AG04449 (cell line): ENCODE measurements at regions of chr10 and their contacts with region 1.

Region 1: GRCh38 chr10:34637418-34637911 is 177.6 kb downstream of the PARD3 start:
- DNase-seq: no peak
- H3K4me3 ChIP-seq: no peak overlapping the region
- CTCF ChIP-seq: peak; percentile 93

Region 2: GRCh38 chr10:33330543-33331378 is 1306.7 kb before region 1 on chr10:
- CTCF ChIA-PET with region 1: interaction called, 33 read pairs
- POLR2A ChIA-PET with region 1: no interaction called
- DNase-seq: no peak
- H3K4me3 ChIP-seq: peak overlapping the region; percentile 86
- CTCF ChIP-seq: peak; percentile 81

Region 3: DNA sequence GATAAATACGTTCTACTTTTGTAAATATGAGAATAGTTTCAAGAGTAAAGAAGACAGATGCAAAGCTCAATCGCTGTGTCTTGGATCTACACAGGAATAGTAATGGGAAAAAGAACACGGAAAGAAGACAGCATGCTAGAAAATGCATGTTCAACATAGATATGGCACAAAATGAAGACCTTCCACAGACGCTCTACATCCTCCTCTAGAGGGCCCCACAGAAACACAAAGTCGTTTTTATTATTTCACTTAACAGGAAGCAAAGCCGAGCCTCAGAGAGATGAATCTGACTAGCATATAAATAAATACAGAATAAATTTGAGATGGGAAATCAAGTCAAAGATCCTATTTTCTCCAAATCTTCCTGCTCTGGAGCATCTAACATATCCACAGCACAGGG is 114.9 kb before region 1 on chr10:
- CTCF ChIA-PET with region 1: interaction called, 69 read pairs
- POLR2A ChIA-PET with region 1: interaction called, 3 read pairs
- DNase-seq: no peak
- H3K4me3 ChIP-seq: no peak overlapping the region
- CTCF ChIP-seq: peak; percentile 31

Region 4: GRCh38 chr10:34528320-34528719 is 109.1 kb before region 1 on chr10:
- CTCF ChIA-PET with region 1: interaction called, 69 read pairs
- POLR2A ChIA-PET with region 1: interaction called, 3 read pairs
- DNase-seq: peak; percentile 80
- H3K4me3 ChIP-seq: no peak overlapping the region
- CTCF ChIP-seq: no peak

Region 5: GRCh38 chr10:34615770-34616169 is 21.7 kb before region 1 on chr10:
- CTCF ChIA-PET with region 1: interaction called, 10 read pairs
- POLR2A ChIA-PET with region 1: no interaction called
- DNase-seq: no peak
- H3K4me3 ChIP-seq: no peak overlapping the region
- CTCF ChIP-seq: no peak

Region 6: GRCh38 chr10:34650156-34650555 is 12.7 kb after region 1 on chr10:
- CTCF ChIA-PET with region 1: interaction called, 49 read pairs
- POLR2A ChIA-PET with region 1: no interaction called
- DNase-seq: no peak
- H3K4me3 ChIP-seq: no peak overlapping the region
- CTCF ChIP-seq: no peak